HepG2 (cell line): ENCODE measurements at regions of chr17 and their contacts with region 1.

Region 1: GRCh38 chr17:68019675-68020408 is 15.7 kb upstream of the KPNA2 start:
- DNase-seq: peak; percentile 95
- ATAC-seq: peak; percentile 93
- H3K4me3 ChIP-seq: peak overlapping the region; percentile 65 to 75 (median 67)
- H3K27ac ChIP-seq: peak overlapping the region; percentile 92
- H3K4me1 ChIP-seq: peaks cover 50% of the 10 kb centered on the region
- H3K27me3 ChIP-seq: peaks cover 0 to 2% of the 10 kb centered on the region in 2 experiments; a peak in 1 of 5 replicates
- CTCF ChIP-seq: peak; percentile 65
- EP300 ChIP-seq: 0 out of 4 replicates have a peak, but pooled peaks of 1 of the 2 experiments have one; percentile 28
- POLR2A ChIP-seq: peak; percentile 95 to 96
- RAD21 ChIP-seq: peak; percentile 81

Region 2: GRCh38 chr17:67922503-67922902 is 97.3 kb before region 1 on chr17:
- CTCF ChIA-PET with region 1: no interaction called
- POLR2A ChIA-PET with region 1: no interaction called
- in situ Hi-C with region 1: no loop called
- intact Hi-C with region 1: no loop called
- DNase-seq: no peak
- ATAC-seq: no peak; the same call in 2 of the 3 replicates
- H3K4me3 ChIP-seq: no peak overlapping the region
- H3K27ac ChIP-seq: no peak overlapping the region
- H3K4me1 ChIP-seq: no peaks in the 10 kb centered on the region
- H3K27me3 ChIP-seq: no peaks in the 10 kb centered on the region
- CTCF ChIP-seq: no peak
- EP300 ChIP-seq: no peak
- POLR2A ChIP-seq: no peak
- RAD21 ChIP-seq: no peak

Region 3: DNA sequence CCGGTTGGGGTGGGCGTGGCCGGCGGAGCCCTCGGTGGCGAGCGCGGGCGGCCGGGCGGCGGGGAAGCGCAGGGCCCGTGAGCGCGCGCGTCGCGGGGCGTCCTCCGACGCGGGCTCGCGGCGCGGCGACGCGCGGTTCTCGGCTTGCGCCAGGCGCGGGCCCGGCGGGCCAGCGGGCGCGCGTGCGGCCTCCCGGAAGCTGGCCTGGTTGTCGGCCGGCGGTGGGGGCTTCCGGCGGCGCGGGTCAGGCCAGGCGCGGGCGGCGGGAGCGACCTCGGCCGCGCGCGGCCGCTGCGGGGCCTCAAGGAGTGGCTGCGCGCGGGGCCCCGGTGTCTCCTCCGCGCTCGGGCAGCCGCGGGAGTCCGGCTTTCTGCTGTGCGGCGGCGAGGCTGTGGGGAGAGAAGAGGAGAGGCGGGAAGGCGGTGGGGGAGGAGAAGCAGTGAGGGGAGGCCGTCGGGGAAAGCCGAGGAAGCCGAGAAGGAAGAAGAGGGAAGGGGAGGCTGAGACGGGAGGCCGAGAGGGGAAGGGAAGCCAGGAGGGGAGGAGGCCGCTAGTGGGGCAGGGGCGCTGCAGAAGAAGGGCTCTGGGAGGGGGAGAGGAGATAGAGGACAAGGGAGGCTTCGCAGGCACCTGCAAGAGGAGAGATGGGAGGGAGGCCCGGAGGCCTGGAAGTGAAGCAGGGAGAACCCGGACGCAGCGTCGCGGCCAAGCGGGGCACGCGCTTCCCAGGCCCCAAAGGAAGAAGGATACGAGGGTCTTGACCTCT is 26.1 kb before region 1 on chr17:
- CTCF ChIA-PET with region 1: no interaction called
- POLR2A ChIA-PET with region 1: interaction called, 25 read pairs
- in situ Hi-C with region 1: no loop called
- intact Hi-C with region 1: no loop called
- DNase-seq: peak; percentile 68
- ATAC-seq: peak; percentile 59
- H3K4me3 ChIP-seq: peak overlapping the region; percentile 62 to 89 (median 72)
- H3K27ac ChIP-seq: peak overlapping the region; percentile 89
- H3K4me1 ChIP-seq: peaks cover 36% of the 10 kb centered on the region
- H3K27me3 ChIP-seq: peaks cover 0 to 7% of the 10 kb centered on the region in 2 experiments; a peak in 1 of 5 replicates
- CTCF ChIP-seq: no peak
- EP300 ChIP-seq: no peak
- POLR2A ChIP-seq: peak in 1 of 2 experiments; percentile 41; a peak in 1 of 4 replicates
- RAD21 ChIP-seq: no peak

Region 4: DNA sequence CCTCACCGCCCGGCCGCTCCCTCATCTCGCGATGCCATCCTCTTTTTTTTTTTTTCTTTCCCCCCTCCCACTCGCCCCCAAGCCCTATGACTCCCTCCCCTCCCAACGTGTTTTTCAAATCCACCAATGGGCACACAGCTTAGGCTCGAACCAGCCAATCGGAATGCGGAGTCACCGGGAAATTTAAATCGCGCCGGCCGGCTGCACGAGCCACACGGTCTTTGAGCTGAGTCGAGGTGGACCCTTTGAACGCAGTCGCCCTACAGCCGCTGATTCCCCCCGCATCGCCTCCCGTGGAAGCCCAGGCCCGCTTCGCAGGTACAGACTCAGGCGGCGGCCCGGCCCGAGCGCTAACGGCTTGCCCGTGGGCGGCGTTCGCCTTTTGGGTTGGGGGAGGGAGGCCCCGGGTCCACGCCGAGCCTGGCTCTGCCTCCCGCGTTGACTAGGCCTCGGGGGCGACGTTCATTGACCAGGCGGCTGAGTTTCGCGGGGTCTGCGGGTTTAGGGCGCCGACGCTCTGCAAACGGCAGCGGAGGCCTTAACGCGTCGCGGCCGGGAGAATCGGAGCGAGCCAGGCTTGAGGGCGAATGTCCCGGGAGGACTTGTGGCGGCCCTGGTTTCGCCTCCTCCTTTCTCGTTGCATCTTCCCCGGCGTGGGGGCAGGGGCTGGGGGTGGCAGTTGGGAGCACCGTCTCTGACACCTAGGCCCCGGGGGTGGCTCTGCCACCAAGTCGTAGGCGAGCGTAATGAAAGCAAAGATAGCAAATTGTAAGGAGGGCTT is 15.9 kb after region 1 on chr17 and contains the start of gene KPNA2:
- CTCF ChIA-PET with region 1: no interaction called
- POLR2A ChIA-PET with region 1: interaction called, 44 read pairs
- in situ Hi-C with region 1: no loop called
- intact Hi-C with region 1: loop called (anchors 2 kb)
- DNase-seq: peak; percentile 99
- ATAC-seq: peak; percentile 94
- H3K4me3 ChIP-seq: peak within 1 kb of the TSS; percentile 81 to 98 (median 93)
- H3K27ac ChIP-seq: peak within 1 kb of the TSS; percentile 97
- H3K4me1 ChIP-seq: peaks cover 56% of the 10 kb centered on the region
- H3K27me3 ChIP-seq: no peaks in the 10 kb centered on the region; a peak in 1 of 5 replicates
- CTCF ChIP-seq: no peak
- EP300 ChIP-seq: peak in 1 of 2 experiments; percentile 78; a peak in 2 of 4 replicates
- POLR2A ChIP-seq: peak; percentile 97 to 98
- RAD21 ChIP-seq: peak; percentile 71
- total RNA-seq, gene KPNA2: 305 and 410 TPM in 2 replicates

Region 5: GRCh38 chr17:68124873-68125870 is 105.3 kb after region 1 on chr17:
- CTCF ChIA-PET with region 1: no interaction called
- POLR2A ChIA-PET with region 1: no interaction called
- in situ Hi-C with region 1: no loop called
- intact Hi-C with region 1: no loop called
- DNase-seq: no peak
- ATAC-seq: no peak
- H3K4me3 ChIP-seq: no peak overlapping the region
- H3K27ac ChIP-seq: no peak overlapping the region
- H3K4me1 ChIP-seq: 0 out of 2 replicates have a peak, but pooled peaks cover 7% of the 10 kb centered on the region
- H3K27me3 ChIP-seq: no peaks in the 10 kb centered on the region
- CTCF ChIP-seq: no peak
- EP300 ChIP-seq: no peak
- POLR2A ChIP-seq: no peak
- RAD21 ChIP-seq: no peak